Ascending aorta (tissue), 2 donors: ENCODE measurements at regions of chr3 and their contacts with region 1.

Region 1: GRCh38 chr3:184017672-184018423 is at the start of gene ABCC5:
- DNase-seq: peak; percentile 50 to 94
- H3K4me3 ChIP-seq: peak within 1 kb of the TSS; percentile 88 to 98
- H3K27ac ChIP-seq: peak within 1 kb of the TSS; percentile 58 to 60
- H3K4me1 ChIP-seq: peaks cover 0 to 4% of the 10 kb centered on the region in 2 donors
- H3K27me3 ChIP-seq: no peaks in the 10 kb centered on the region
- CTCF ChIP-seq: peak; percentile 4 to 50 (median 43)
- total RNA-seq, gene ABCC5: 16.2 TPM

Region 2: DNA sequence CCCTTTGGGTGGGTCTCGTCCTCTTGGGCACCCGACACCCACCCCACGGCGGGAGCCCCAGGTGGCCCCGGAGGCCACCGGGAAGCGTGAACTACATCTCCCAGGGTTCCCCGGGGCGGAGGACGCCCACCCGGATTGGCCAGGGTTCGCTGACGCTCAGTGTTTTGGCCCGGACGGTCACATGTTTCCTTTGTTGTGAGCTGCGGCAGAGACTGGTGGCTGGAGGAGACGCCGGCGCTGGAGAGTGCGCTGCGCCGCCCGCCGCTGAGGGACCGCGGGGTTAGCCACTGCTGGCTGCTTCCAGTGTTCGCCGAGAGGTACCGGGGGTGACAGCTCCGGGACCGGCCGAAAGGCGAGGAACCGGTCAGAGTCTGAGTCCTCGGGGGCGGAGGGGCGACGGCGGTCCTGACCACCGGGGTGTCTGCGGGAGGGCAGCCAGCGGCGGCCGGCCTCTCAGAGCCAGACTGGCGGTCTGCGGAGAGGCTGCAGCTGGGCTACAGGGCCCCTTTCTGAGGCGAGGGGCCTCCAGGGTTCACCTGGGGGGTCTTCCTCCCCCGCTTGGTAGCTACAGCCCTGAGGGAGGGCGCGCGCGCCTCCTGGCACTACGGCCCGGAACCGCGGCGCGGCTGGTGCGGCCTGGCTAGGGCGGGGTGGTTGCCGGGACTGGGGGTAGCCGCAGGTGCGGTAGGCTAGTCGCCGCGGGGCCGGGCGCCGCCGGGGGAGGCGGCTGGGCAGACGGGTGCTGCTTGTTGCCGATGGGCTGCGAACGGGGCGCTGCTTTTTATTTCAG is 382.2 kb before region 1 on chr3 and contains the start of gene KLHL24:
- intact Hi-C with region 1: loop called (anchors 5 kb)
- DNase-seq: peak; percentile 83 to 95
- H3K4me3 ChIP-seq: peak within 1 kb of the TSS; percentile 91 to 95
- H3K27ac ChIP-seq: peak within 1 kb of the TSS; percentile 92 to 100
- H3K4me1 ChIP-seq: peaks cover 0 to 16% of the 10 kb centered on the region in 2 donors
- H3K27me3 ChIP-seq: no peaks in the 10 kb centered on the region
- CTCF ChIP-seq: peak in 1 of 3 experiments; percentile 6
- total RNA-seq, gene KLHL24: 26.6 TPM

Region 3: DNA sequence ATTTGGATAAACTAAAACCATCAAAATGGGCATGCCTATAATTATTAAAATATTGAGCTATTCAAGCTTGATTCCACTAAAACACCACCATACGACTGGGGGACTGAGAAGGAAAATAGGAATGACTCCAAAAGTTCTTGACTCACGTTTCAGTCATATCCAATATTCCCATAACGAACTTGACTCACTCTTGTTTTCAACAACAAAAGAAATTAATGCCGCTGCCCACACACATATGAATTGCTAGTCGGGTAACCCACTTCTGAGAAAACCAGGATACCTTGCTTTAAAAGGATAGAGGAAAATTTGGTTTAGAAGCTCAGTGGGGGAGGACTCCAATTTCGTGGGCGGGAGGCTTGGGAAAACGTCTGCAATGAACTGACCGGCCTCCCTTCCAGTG is 40.2 kb after region 1 on chr3:
- intact Hi-C with region 1: no loop called
- DNase-seq: no peak
- H3K4me3 ChIP-seq: no peak overlapping the region
- H3K27ac ChIP-seq: no peak overlapping the region
- H3K4me1 ChIP-seq: no peaks in the 10 kb centered on the region
- H3K27me3 ChIP-seq: no peaks in the 10 kb centered on the region
- CTCF ChIP-seq: no peak

Region 4: GRCh38 chr3:184135149-184135910 is 117.5 kb after region 1 on chr3 and contains the start of gene EIF2B5:
- intact Hi-C with region 1: loop called (anchors 2 kb)
- DNase-seq: peak; percentile 71 to 96
- H3K4me3 ChIP-seq: peak within 1 kb of the TSS; percentile 74 to 91
- H3K27ac ChIP-seq: peak within 1 kb of the TSS; percentile 90 to 91
- H3K4me1 ChIP-seq: peaks cover 3 to 9% of the 10 kb centered on the region in 2 donors
- H3K27me3 ChIP-seq: no peaks in the 10 kb centered on the region
- CTCF ChIP-seq: peak in 2 of 3 experiments; percentile 44 to 51
- total RNA-seq, gene EIF2B5: 24.7 TPM

Region 5: GRCh38 chr3:184185461-184186308 is 167.8 kb after region 1 on chr3 and contains the start of gene ABCF3:
- intact Hi-C with region 1: loop called (anchors 5 kb)
- DNase-seq: peak; percentile 98 to 100
- H3K4me3 ChIP-seq: peak within 1 kb of the TSS; percentile 91 to 97
- H3K27ac ChIP-seq: peak within 1 kb of the TSS; percentile 87 to 93
- H3K4me1 ChIP-seq: peaks cover 0 to 16% of the 10 kb centered on the region in 2 donors
- H3K27me3 ChIP-seq: no peaks in the 10 kb centered on the region
- CTCF ChIP-seq: no peak
- total RNA-seq, gene ABCF3: 93.3 TPM

Region 6: GRCh38 chr3:184362668-184363540 is 345.1 kb after region 1 on chr3:
- intact Hi-C with region 1: loop called (anchors 5 kb)
- DNase-seq: peak; percentile 79 to 98
- H3K4me3 ChIP-seq: peak overlapping the region; percentile 64 to 78
- H3K27ac ChIP-seq: peak overlapping the region; percentile 99 to 100
- H3K4me1 ChIP-seq: peaks cover 5 to 15% of the 10 kb centered on the region in 2 donors
- H3K27me3 ChIP-seq: no peaks in the 10 kb centered on the region
- CTCF ChIP-seq: peak in 2 of 3 experiments; percentile 56 to 68